Activated T-helper 2 cell treated with anti-CD3 and anti-CD28 coated beads, Interferon-gamma antibody, Interleukin-2, Interleukin-4, amounts not matched to agents 10 μg/mL and 5 μg/mL and 100 μg/mL, durations not matched to agents 14 hours and 24 hours and 36 hours (primary cell): ENCODE measurements at regions of chr3 and their contacts with region 1.

Region 1: GRCh38 chr3:149621218-149622005 is 36.4 kb downstream of the WWTR1 start:
- DNase-seq: no peak
- H3K4me3 Mint-ChIP-seq: peak overlapping the region; percentile 39
- H3K27ac Mint-ChIP-seq: peak overlapping the region; percentile 77
- H3K4me1 Mint-ChIP-seq: peaks cover 34% of the 10 kb centered on the region
- H3K27me3 Mint-ChIP-seq: no peaks in the 10 kb centered on the region

Region 2: GRCh38 chr3:149609595-149609994 is 11.8 kb before region 1 on chr3:
- intact Hi-C with region 1: loop called (anchors 1 kb)
- DNase-seq: no peak
- H3K4me3 Mint-ChIP-seq: no peak overlapping the region
- H3K27ac Mint-ChIP-seq: no peak overlapping the region
- H3K4me1 Mint-ChIP-seq: peaks cover 10% of the 10 kb centered on the region
- H3K27me3 Mint-ChIP-seq: peaks cover 2% of the 10 kb centered on the region

Region 3: GRCh38 chr3:149657926-149658733 is 36.7 kb after region 1 on chr3 and contains the start of gene WWTR1:
- intact Hi-C with region 1: loop called (anchors 5 kb)
- DNase-seq: peak; percentile 26
- H3K4me3 Mint-ChIP-seq: peak within 1 kb of the TSS; percentile 90
- H3K27ac Mint-ChIP-seq: peak within 1 kb of the TSS; percentile 73
- H3K4me1 Mint-ChIP-seq: peaks cover 22% of the 10 kb centered on the region
- H3K27me3 Mint-ChIP-seq: peaks cover 39% of the 10 kb centered on the region
- total RNA-seq, gene WWTR1: 2.6 TPM in 2 replicates

Region 4: DNA sequence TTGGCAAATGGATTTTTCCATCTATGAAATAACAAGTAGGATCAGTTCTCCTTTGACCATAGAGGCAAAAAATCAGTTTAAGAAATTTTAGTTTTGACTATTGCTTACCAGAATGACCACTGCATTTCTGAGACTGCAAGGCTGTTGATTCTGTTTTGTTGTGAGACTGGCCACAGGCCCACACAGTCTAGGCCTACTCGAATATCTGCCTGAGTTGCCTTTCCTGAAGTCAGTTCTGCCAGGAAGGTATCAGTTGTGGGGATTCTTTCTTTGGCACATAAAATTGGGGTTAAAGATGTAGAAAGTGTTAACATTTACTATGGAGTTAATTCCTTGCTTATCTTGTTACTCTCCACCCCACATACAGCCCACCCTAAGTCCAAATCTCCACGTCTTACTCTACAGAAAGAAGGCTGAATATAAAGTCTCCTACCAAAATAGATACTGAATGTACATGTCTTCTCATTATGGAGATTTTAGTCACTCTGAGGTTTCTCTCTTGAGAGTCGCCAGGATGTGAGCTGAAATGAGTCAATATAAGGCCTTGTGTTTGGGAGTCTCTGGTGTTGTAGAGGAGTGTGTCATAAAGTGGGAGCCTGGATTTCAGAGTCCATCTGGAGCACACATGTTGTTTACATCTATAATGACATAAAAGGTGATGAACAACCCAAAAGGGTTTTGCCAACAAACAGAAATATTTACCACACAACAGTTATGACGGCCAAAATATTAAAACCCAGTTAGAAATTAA is 81.5 kb after region 1 on chr3:
- intact Hi-C with region 1: loop called (anchors 1 kb)
- DNase-seq: no peak
- H3K4me3 Mint-ChIP-seq: no peak overlapping the region
- H3K27ac Mint-ChIP-seq: peak overlapping the region; percentile 80
- H3K4me1 Mint-ChIP-seq: peaks cover 25% of the 10 kb centered on the region
- H3K27me3 Mint-ChIP-seq: no peaks in the 10 kb centered on the region

Region 5: GRCh38 chr3:149726716-149727407 is 105.5 kb after region 1 on chr3:
- intact Hi-C with region 1: loop called (anchors 1 kb)
- DNase-seq: no peak
- H3K4me3 Mint-ChIP-seq: no peak overlapping the region
- H3K27ac Mint-ChIP-seq: no peak overlapping the region
- H3K4me1 Mint-ChIP-seq: peaks cover 9% of the 10 kb centered on the region
- H3K27me3 Mint-ChIP-seq: no peaks in the 10 kb centered on the region

Region 6: DNA sequence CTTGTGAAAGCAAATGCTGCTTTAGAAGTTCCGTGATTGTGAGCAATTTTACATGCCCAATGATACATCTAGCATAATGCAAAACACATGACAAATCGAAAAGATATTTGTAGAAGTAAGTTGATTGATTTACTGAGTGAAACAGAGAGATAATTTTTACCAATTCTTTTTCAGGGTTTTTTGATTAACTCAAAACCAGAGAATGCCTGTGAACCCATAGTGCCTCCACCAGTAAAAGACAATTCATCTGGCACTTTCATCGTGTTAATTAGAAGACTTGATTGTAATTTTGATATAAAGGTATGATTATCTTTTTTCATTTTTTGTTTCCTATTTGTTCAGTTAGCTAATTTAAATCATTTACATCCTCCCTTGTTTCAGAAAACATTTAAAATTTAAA is 250.4 kb after region 1 on chr3:
- intact Hi-C with region 1: no loop called
- DNase-seq: no peak
- H3K4me3 Mint-ChIP-seq: no peak overlapping the region
- H3K27ac Mint-ChIP-seq: no peak overlapping the region
- H3K4me1 Mint-ChIP-seq: peaks cover 6% of the 10 kb centered on the region
- H3K27me3 Mint-ChIP-seq: no peaks in the 10 kb centered on the region

Region 7: GRCh38 chr3:150183678-150184425 is 562.4 kb after region 1 on chr3:
- intact Hi-C with region 1: no loop called
- DNase-seq: peak; percentile 16
- H3K4me3 Mint-ChIP-seq: no peak overlapping the region
- H3K27ac Mint-ChIP-seq: no peak overlapping the region
- H3K4me1 Mint-ChIP-seq: no peaks in the 10 kb centered on the region
- H3K27me3 Mint-ChIP-seq: peaks cover 12% of the 10 kb centered on the region